Left ventricle myocardium superior (tissue), 1 donor: ENCODE measurements at regions of chr4 and their contacts with region 1.

Region 1: GRCh38 chr4:143207557-143207956 is 22.8 kb downstream of the USP38 start:
- DNase-seq: no peak
- ATAC-seq: peak; percentile 72

Region 2: GRCh38 chr4:143046454-143046853 is 161.1 kb before region 1 on chr4:
- intact Hi-C with region 1: no loop called
- DNase-seq: no peak
- ATAC-seq: no peak

Region 3: GRCh38 chr4:143482840-143483239 is 275.3 kb after region 1 on chr4:
- intact Hi-C with region 1: loop called (anchors 2 kb)
- DNase-seq: no peak
- ATAC-seq: peak; percentile 42